ENCODE measurements at regions of chr3 and their contacts with region 1.

Region 1: DNA sequence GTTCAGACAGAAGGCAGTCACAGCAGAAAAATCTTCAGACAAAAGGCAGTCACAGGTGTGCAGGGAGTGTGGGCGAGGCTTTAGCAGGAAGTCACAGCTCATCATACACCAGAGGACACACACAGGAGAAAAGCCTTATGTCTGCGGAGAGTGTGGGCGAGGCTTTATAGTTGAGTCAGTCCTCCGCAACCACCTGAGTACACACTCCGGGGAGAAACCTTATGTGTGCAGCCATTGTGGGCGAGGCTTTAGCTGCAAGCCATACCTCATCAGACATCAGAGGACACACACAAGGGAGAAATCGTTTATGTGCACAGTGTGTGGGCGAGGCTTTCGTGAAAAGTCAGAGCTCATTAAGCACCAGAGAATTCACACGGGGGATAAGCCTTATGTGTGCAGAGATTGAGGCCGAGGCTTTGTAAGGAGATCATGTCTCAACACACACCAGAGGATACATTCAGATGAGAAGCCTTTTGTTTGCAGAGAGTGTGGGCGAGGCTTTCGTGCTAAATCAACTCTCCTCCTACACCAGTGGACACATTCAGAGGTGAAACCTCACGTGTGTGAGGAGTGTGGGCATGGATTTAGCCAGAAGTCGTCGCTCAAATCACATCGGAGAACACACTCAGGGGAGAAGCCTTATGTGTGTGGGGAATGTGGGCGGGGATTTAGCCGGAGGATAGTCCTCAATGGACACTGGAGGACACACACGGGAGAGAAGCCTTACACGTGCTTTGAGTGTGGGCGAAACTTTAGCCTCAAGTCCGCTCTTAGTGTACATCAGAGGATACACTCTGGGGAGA is 27.7 kb downstream of the ZNF589 start:
- DNase-seq: peak; percentile 89
- ATAC-seq: peak; percentile 97
- H3K4me3 Mint-ChIP-seq: peak overlapping the region; percentile 60
- H3K27ac Mint-ChIP-seq: peak overlapping the region; percentile 85
- H3K4me1 Mint-ChIP-seq: peaks cover 38% of the 10 kb centered on the region
- H3K27me3 Mint-ChIP-seq: no peaks in the 10 kb centered on the region

Region 2: DNA sequence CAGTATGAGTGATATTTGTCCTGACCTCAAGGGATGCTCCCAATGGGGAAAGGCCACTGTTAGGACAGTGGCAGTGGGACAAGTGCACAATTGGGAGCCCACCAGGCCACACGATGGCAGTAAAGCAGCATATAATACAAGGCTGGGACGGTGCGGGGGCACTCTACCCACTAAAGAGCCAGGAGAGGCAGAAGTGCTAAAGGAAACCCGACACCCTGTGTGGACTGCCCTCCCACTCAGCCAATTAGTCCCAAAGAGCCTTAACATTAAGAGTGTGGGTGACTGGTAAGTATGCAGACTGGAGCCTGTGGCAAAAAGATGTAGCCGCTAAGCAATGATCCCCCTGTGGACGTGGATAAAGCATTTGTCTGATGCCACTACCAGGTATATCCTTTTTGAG is 35.8 kb before region 1 on chr3:
- CTCF ChIA-PET with region 1: interaction called, 10 read pairs
- POLR2A ChIA-PET with region 1: no interaction called
- DNase-seq: peak; percentile 76
- ATAC-seq: peak; percentile 98
- H3K4me3 Mint-ChIP-seq: no peak overlapping the region
- H3K27ac Mint-ChIP-seq: no peak overlapping the region
- H3K4me1 Mint-ChIP-seq: peaks cover 7% of the 10 kb centered on the region
- H3K27me3 Mint-ChIP-seq: no peaks in the 10 kb centered on the region

Region 3: GRCh38 chr3:48301020-48301796 is 32.6 kb after region 1 on chr3:
- CTCF ChIA-PET with region 1: interaction called, 5 read pairs
- POLR2A ChIA-PET with region 1: interaction called, 10 read pairs
- DNase-seq: peak; percentile 94
- ATAC-seq: peak; percentile 89
- H3K4me3 Mint-ChIP-seq: peak within 1 kb of the TSS; percentile 93
- H3K27ac Mint-ChIP-seq: peak within 1 kb of the TSS; percentile 97
- H3K4me1 Mint-ChIP-seq: peaks cover 40% of the 10 kb centered on the region
- H3K27me3 Mint-ChIP-seq: peaks cover 8% of the 10 kb centered on the region

Measured in activated CD8-positive, alpha-beta T cell treated with anti-CD3 and anti-CD28 coated beads, Interleukin-2, amount 10 ng/mL, durations not matched to agents 7 days and 5 days (primary cell).